CD14-positive monocyte (primary cell): ENCODE measurements at regions of chr12 and their contacts with region 1.

Region 1: GRCh38 chr12:53575502-53576253 is 50.5 kb downstream of the ATF7 start:
- DNase-seq: peak; percentile 89 to 98 (median 94)
- H3K4me3 ChIP-seq: peak overlapping the region in 2 of 3 experiments; percentile 13 to 42
- H3K4me3 Mint-ChIP-seq: peak overlapping the region in 1 of 2 donors; percentile 68
- H3K27ac ChIP-seq: peak overlapping the region; percentile 91 to 96
- H3K27ac Mint-ChIP-seq: peak overlapping the region; percentile 92 to 99 (median 97)
- H3K4me1 ChIP-seq: peaks cover 36 to 48% of the 10 kb centered on the region in 2 donors
- H3K4me1 Mint-ChIP-seq: peaks cover 54% of the 10 kb centered on the region
- H3K27me3 ChIP-seq: no peaks in the 10 kb centered on the region
- H3K27me3 Mint-ChIP-seq: peaks cover 0 to 2% (median 0%) of the 10 kb centered on the region in 3 donors
- CTCF ChIP-seq: no peak

Region 2: GRCh38 chr12:52903285-52903854 is 672.3 kb before region 1 on chr12:
- intact Hi-C with region 1: no loop called
- DNase-seq: peak; percentile 57 to 68 (median 67)
- H3K4me3 ChIP-seq: peak overlapping the region; percentile 38 to 75 (median 56)
- H3K4me3 Mint-ChIP-seq: peak overlapping the region; percentile 76 to 81
- H3K27ac ChIP-seq: peak overlapping the region; percentile 11 to 61
- H3K27ac Mint-ChIP-seq: peak overlapping the region in 4 of 7 donors; percentile 40 to 76 (median 65)
- H3K4me1 ChIP-seq: peaks cover 22 to 23% of the 10 kb centered on the region in 2 donors
- H3K4me1 Mint-ChIP-seq: peaks cover 28% of the 10 kb centered on the region
- H3K27me3 ChIP-seq: no peaks in the 10 kb centered on the region
- H3K27me3 Mint-ChIP-seq: peaks cover 0 to 2% (median 1%) of the 10 kb centered on the region in 3 donors
- CTCF ChIP-seq: no peak

Region 3: DNA sequence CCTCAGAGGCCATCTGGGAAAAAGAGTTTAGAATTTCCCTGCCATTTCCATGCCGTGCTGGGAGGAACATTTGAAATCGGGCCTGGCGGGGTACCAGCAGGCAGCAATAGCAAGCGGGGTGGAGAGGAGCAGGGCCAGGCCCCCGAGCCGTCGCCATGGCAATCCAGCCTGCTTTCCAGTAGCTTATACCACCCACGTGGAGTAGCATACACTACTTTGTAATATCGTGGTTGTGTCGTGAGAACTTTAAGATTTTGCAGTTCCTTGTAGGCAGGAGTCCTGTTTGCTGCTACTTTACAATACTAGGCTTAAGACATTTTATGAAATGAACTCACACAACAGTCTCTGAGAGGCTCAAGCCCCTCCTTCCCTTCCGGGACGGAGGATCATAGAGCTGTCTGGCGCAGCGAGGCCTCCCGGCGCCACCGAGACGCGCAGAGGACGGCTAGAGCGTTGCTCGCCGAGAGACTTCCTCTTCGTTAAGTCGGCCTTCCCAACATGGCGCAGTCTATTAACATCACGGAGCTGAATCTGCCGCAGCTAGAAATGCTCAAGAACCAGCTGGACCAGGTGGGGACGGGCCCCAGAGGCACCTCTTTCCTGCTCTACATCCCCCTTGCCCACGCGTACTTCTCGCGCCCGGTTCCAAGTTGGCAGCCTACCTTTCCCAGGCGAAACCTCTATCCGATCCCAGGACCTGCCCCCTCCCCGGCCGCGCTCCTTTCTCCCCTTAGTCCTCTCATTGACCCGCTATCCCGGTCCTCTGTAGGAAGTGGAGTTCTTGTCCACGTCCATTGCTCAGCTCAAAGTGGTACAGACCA is 280.4 kb before region 1 on chr12 and contains the start of gene PFDN5:
- intact Hi-C with region 1: no loop called
- DNase-seq: peak; percentile 79 to 87 (median 80)
- H3K4me3 ChIP-seq: peak within 1 kb of the TSS; percentile 96 to 97 (median 97)
- H3K4me3 Mint-ChIP-seq: peak within 1 kb of the TSS; percentile 96 to 97
- H3K27ac ChIP-seq: peak within 1 kb of the TSS; percentile 78 to 97
- H3K27ac Mint-ChIP-seq: peak within 1 kb of the TSS; percentile 96 to 100 (median 99)
- H3K4me1 ChIP-seq: peaks cover 50 to 53% of the 10 kb centered on the region in 2 donors
- H3K4me1 Mint-ChIP-seq: peaks cover 50% of the 10 kb centered on the region
- H3K27me3 ChIP-seq: no peaks in the 10 kb centered on the region
- H3K27me3 Mint-ChIP-seq: peaks cover 0 to 2% (median 0%) of the 10 kb centered on the region in 3 donors
- CTCF ChIP-seq: no peak
- polyA plus RNA-seq, gene PFDN5: 1,474 to 2,196 (median 1,751) TPM

Region 4: GRCh38 chr12:53543539-53543938 is 32.1 kb before region 1 on chr12:
- intact Hi-C with region 1: loop called in 1 of 2 experiments (anchors 5 kb)
- DNase-seq: peak; percentile 35 to 51 (median 37)
- H3K4me3 ChIP-seq: no peak overlapping the region
- H3K4me3 Mint-ChIP-seq: no peak overlapping the region
- H3K27ac ChIP-seq: peak overlapping the region in 1 of 2 donors; percentile 67
- H3K27ac Mint-ChIP-seq: peak overlapping the region in 4 of 7 donors; percentile 30 to 73 (median 38)
- H3K4me1 ChIP-seq: no peaks in the 10 kb centered on the region
- H3K4me1 Mint-ChIP-seq: peaks cover 2% of the 10 kb centered on the region
- H3K27me3 ChIP-seq: no peaks in the 10 kb centered on the region
- H3K27me3 Mint-ChIP-seq: no peaks in the 10 kb centered on the region
- CTCF ChIP-seq: peak; percentile 79

Region 5: DNA sequence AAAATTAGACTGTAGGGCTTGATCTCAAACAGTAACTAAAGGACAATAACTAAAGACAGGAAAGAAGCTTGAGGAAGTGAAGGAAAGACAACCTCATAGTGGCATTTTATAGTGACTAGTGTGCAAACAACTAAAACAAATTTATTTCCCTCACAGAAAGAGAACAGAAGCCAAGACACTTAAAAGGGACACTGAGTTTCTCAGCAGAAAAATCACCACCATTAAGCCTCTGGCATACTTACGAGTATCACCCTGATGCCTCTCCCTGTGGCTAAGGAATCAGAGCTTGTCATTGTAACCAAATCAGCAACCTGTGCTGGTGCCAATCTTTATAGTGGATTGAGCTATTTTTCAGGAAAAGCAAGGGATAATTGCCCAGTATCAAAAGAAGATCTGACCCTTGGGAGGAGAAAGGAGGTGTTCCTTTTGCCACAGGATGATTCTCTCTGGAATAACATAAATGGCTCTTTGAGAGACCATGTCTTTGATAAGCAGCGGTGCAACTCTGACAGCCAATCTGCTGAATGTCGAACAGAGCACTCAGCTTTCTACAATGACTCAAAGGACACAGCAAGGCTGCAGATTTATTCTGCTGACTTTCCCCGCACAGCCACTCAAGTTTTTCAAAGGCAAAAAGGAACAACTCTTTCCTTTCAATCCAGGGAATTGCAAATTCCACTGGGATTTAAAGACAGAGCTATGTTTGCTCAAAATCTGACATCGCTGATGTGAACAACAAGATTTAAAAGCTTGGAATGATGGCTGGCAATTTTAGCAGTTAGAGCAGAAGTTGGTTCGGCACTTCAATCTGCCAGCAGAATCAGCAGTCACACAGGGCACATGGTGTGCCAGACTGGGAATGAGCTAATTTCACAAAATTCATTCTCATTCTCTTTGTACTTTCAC is 15.9 kb after region 1 on chr12:
- intact Hi-C with region 1: no loop called
- DNase-seq: no peak
- H3K4me3 ChIP-seq: no peak overlapping the region
- H3K4me3 Mint-ChIP-seq: no peak overlapping the region
- H3K27ac ChIP-seq: peak overlapping the region in 1 of 2 donors; percentile 62
- H3K27ac Mint-ChIP-seq: peak overlapping the region in 1 of 7 donors; percentile 23
- H3K4me1 ChIP-seq: no peaks in the 10 kb centered on the region
- H3K4me1 Mint-ChIP-seq: peaks cover 13% of the 10 kb centered on the region
- H3K27me3 ChIP-seq: no peaks in the 10 kb centered on the region
- H3K27me3 Mint-ChIP-seq: no peaks in the 10 kb centered on the region
- CTCF ChIP-seq: no peak

Region 6: GRCh38 chr12:53625946-53626701 is 50.4 kb after region 1 on chr12 and contains the start of gene ATF7:
- intact Hi-C with region 1: loop called in 1 of 2 experiments (anchors 5 kb)
- DNase-seq: peak; percentile 97 to 98 (median 97)
- H3K4me3 ChIP-seq: peak within 1 kb of the TSS; percentile 81 to 100 (median 99)
- H3K4me3 Mint-ChIP-seq: peak within 1 kb of the TSS; percentile 91 to 98
- H3K27ac ChIP-seq: peak within 1 kb of the TSS; percentile 75 to 94
- H3K27ac Mint-ChIP-seq: peak within 1 kb of the TSS; percentile 91 to 100 (median 98)
- H3K4me1 ChIP-seq: peaks cover 37 to 42% of the 10 kb centered on the region in 2 donors
- H3K4me1 Mint-ChIP-seq: peaks cover 47% of the 10 kb centered on the region
- H3K27me3 ChIP-seq: no peaks in the 10 kb centered on the region
- H3K27me3 Mint-ChIP-seq: peaks cover 0 to 2% (median 1%) of the 10 kb centered on the region in 3 donors
- CTCF ChIP-seq: no peak
- polyA plus RNA-seq, gene ATF7: 21.7 to 27.9 (median 24.4) TPM

Region 7: DNA sequence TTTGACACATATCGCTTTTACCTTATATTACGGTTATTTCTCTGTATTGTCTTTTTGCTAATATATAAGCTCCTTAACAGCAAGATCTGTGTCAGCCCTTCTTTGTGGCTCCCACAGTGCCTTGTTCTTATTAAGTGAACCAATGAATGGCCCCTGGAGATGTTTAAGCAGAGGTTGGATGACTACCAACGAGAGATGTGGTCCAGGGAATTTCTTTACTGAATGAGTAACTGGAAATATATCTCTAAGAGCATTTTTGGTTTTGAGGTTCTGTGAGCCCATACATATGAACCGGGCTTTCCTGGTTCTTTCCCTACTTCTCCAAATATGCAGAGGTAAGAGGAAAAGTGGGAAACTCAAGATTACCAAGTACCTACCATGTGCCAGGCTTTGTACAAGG is 128.1 kb after region 1 on chr12:
- intact Hi-C with region 1: no loop called
- DNase-seq: no peak
- H3K4me3 ChIP-seq: no peak overlapping the region
- H3K4me3 Mint-ChIP-seq: no peak overlapping the region
- H3K27ac ChIP-seq: no peak overlapping the region
- H3K27ac Mint-ChIP-seq: no peak overlapping the region
- H3K4me1 ChIP-seq: no peaks in the 10 kb centered on the region
- H3K4me1 Mint-ChIP-seq: peaks cover 2% of the 10 kb centered on the region
- H3K27me3 ChIP-seq: peaks cover 59 to 72% of the 10 kb centered on the region in 2 donors
- H3K27me3 Mint-ChIP-seq: peaks cover 70 to 82% (median 74%) of the 10 kb centered on the region in 3 donors
- CTCF ChIP-seq: no peak